K562 (cell line): ENCODE measurements at regions of chr10 and their contacts with region 1.

Region 1: DNA sequence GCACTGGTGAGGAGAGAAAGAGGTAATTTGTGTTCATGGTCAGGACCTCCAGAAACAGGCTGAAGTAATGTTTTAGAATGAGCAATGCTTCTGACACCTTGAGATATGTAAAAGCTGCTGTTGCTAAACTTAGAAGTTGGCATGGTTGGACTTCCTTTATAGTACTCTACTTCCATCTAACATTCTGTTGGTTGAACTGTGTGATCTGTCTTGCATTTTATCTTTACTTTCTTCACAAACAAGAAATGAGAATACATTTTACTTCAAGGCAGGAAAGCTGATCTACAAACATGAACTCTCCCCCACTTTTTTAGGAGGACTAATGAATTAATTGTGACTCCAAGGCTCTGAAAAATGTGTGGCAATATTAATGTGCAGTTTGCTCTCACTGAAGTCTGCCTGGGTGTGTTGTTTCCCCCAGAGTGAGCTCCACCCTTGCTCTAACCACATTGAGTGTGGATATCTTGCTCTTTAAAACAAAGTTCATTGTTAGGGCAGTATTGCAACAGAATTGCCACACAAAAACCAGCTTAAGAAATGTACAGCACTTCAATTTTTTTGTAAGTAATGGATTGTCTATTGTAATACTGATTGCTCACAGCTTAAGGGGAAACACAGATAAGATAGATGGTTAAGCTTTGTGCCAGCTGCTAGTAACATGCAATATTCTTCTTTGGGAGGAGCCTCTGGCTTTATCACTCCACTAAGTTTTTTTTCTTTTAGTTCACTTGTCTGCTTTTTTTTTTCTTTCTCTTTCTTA is 69.0 kb downstream of the ADD3 start:
- DNase-seq: peak in 3 of 4 experiments; percentile 11 to 61 (median 43)
- ATAC-seq: peak; percentile 76
- H3K4me3 ChIP-seq: no peak overlapping the region
- H3K27ac ChIP-seq: peak overlapping the region; percentile 82
- H3K4me1 ChIP-seq: peaks cover 5 to 57% of the 10 kb centered on the region in 2 experiments; a peak in 4 of 5 replicates
- H3K27me3 ChIP-seq: no peaks in the 10 kb centered on the region
- CTCF ChIP-seq: no peak
- EP300 ChIP-seq: no peak
- POLR2A ChIP-seq: no peak
- RAD21 ChIP-seq: no peak; a peak in 1 of 4 replicates

Region 2: GRCh38 chr10:109912335-109913281 is 164.1 kb before region 1 on chr10:
- CTCF ChIA-PET with region 1: no interaction called
- POLR2A ChIA-PET with region 1: no interaction called
- in situ Hi-C with region 1: no loop called
- intact Hi-C with region 1: no loop called
- DNase-seq: no peak
- ATAC-seq: no peak
- H3K4me3 ChIP-seq: no peak overlapping the region
- H3K27ac ChIP-seq: no peak overlapping the region
- H3K4me1 ChIP-seq: 0 out of 5 replicates have a peak, but pooled peaks cover 0 to 4% of the 10 kb centered on the region in 2 experiments
- H3K27me3 ChIP-seq: no peaks in the 10 kb centered on the region
- CTCF ChIP-seq: no peak
- EP300 ChIP-seq: no peak
- POLR2A ChIP-seq: no peak
- RAD21 ChIP-seq: no peak

Region 3: GRCh38 chr10:110007701-110008517 is 68.8 kb before region 1 on chr10 and contains the start of gene ADD3:
- CTCF ChIA-PET with region 1: no interaction called
- POLR2A ChIA-PET with region 1: interaction called, 6 read pairs
- in situ Hi-C with region 1: no loop called
- intact Hi-C with region 1: loop called (anchors 5 kb)
- DNase-seq: peak; percentile 94 to 97 (median 96)
- ATAC-seq: peak; percentile 82
- H3K4me3 ChIP-seq: peak within 1 kb of the TSS; percentile 92
- H3K27ac ChIP-seq: peak within 1 kb of the TSS; percentile 92
- H3K4me1 ChIP-seq: peaks cover 15 to 32% of the 10 kb centered on the region in 2 experiments
- H3K27me3 ChIP-seq: no peaks in the 10 kb centered on the region
- CTCF ChIP-seq: no peak
- EP300 ChIP-seq: no peak
- POLR2A ChIP-seq: peak; percentile 66; the same call in 1 of the 2 replicates
- RAD21 ChIP-seq: no peak
- polyA plus RNA-seq, gene ADD3: 13.2 to 15.1 TPM